Lower leg skin (tissue), 4 donors: ENCODE measurements at regions of chr6 and their contacts with region 1.

Region 1: DNA sequence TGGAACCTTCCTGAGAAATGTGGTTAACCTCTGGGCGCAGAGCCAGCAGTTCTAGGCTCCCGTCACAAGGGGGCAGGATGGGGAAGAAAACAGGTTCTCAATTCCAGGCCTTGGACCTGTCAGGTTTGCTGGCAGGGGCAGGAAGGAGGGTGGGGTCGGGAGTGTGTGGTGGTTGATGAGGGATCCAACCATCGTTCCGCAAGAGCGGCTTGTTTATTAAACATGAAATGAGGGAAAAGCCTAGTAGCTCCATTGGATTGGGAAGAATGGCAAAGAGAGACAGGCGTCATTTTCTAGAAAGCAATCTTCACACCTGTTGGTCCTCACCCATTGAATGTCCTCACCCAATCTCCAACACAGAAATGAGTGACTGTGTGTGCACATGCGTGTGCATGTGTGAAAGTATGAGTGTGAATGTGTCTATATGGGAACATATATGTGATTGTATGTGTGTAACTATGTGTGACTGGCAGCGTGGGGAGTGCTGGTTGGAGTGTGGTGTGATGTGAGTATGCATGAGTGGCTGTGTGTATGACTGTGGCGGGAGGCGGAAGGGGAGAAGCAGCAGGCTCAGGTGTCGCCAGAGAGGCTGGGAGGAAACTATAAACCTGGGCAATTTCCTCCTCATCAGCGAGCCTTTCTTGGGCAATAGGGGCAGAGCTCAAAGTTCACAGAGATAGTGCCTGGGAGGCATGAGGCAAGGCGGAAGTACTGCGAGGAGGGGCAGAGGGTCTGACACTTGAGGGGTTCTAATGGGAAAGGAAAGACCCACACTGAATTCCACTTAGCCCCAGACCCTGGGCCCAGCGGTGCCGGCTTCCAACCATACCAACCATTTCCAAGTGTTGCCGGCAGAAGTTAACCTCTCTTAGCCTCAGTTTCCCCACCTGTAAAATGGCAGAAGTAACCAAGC is 29.6 kb downstream of the SRSF3 start:
- DNase-seq: peak; percentile 90 to 98
- H3K4me3 ChIP-seq: no peak overlapping the region
- CTCF ChIP-seq: peak in 1 of 3 donors; percentile 71
- POLR2A ChIP-seq: no peak

Region 2: GRCh38 chr6:36678518-36679027 is 54.8 kb after region 1 on chr6 and contains the start of gene CDKN1A:
- intact Hi-C with region 1: loop called (anchors 10 kb)
- DNase-seq: peak; percentile 84 to 98
- H3K4me3 ChIP-seq: peak within 1 kb of the TSS; percentile 81
- CTCF ChIP-seq: no peak
- POLR2A ChIP-seq: peak in 1 of 2 donors; percentile 98
- total RNA-seq, gene CDKN1A: 143 to 200 (median 181) TPM

Region 3: DNA sequence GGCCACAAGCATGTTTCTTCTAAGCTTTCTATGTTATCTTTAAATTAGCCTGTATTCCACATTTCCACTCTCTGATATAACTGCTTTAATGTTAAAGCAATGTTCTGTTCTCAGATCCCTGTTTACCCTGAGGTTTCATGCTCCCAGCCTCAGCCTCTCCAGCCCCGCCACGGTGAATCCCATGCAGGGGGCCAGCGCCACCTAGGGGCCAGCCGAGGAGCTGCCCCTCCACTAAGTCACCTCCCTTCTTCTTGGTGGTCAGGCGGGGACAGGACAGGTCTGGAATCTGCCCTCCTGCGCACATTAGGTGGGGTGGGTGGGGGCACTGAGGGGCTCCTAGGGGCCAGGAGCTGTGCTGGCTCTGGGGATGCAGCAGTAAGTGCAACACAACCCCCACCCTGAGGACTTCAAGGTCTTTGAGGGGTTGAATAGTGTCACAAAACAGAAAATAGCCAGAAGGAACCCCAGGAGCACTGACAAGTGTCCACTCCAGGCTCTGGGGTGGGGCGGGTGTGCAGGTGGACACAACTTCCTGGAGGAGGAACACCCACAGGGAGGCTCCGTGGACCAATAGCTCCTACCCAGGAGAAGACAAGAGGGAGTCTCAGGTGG is 135.5 kb after region 1 on chr6:
- intact Hi-C with region 1: loop called (anchors 10 kb)
- DNase-seq: peak; percentile 71 to 96
- H3K4me3 ChIP-seq: no peak overlapping the region
- CTCF ChIP-seq: peak in 1 of 3 donors; percentile 72
- POLR2A ChIP-seq: no peak